CD4-positive, alpha-beta T cell (primary cell): ENCODE measurements at regions of chr7 and their contacts with region 1.

Region 1: GRCh38 chr7:114879554-114879953 is 42.3 kb upstream of the MDFIC start:
- DNase-seq: no peak
- ATAC-seq: no peak
- H3K4me3 ChIP-seq: no peak overlapping the region
- H3K4me3 Mint-ChIP-seq: no peak overlapping the region
- H3K27ac ChIP-seq: no peak overlapping the region
- H3K27ac Mint-ChIP-seq: no peak overlapping the region
- H3K4me1 ChIP-seq: no peaks in the 10 kb centered on the region
- H3K4me1 Mint-ChIP-seq: no peaks in the 10 kb centered on the region
- H3K27me3 ChIP-seq: no peaks in the 10 kb centered on the region
- H3K27me3 Mint-ChIP-seq: no peaks in the 10 kb centered on the region
- CTCF ChIP-seq: no peak

Region 2: DNA sequence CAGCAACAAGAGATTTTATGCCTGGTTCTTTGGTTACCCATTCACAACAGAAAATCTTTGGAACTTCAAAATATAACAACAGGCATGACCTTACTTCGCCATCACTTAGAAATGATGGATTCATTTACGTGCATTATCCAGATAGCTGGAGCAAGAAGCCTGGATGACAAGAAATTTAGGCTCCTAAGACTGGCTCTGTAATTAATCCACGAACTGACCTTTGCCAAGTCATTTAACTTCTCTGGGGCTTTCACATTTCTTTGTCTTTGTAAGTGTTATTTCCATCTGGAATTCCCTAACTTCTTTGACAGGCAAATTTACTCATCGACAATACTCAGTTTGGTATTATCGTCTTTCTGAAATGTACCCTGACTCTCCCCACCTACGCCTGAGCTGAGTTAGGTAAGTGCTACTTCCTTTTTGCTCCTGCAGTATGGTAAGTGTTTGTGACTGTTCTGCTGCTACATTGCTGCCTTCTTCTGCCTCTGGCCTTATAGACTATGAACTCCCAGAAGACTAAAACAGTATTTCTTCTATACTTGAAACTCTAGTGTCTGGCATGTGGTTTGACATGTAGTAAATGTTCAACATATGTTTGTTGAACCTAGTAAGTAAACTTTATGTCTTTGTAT is 36.8 kb after region 1 on chr7:
- CTCF ChIA-PET with region 1: no interaction called
- POLR2A ChIA-PET with region 1: no interaction called
- intact Hi-C with region 1: loop called in 1 of 2 experiments (anchors 5 kb)
- DNase-seq: peak in 4 of 14 experiments; percentile 31 to 54 (median 52)
- ATAC-seq: peak; percentile 81
- H3K4me3 ChIP-seq: peak overlapping the region; percentile 27
- H3K4me3 Mint-ChIP-seq: peak overlapping the region; percentile 72
- H3K27ac ChIP-seq: peak overlapping the region; percentile 2 to 64
- H3K27ac Mint-ChIP-seq: peak overlapping the region; percentile 48
- H3K4me1 ChIP-seq: peaks cover 10% of the 10 kb centered on the region
- H3K4me1 Mint-ChIP-seq: peaks cover 32% of the 10 kb centered on the region
- H3K27me3 ChIP-seq: no peaks in the 10 kb centered on the region
- H3K27me3 Mint-ChIP-seq: no peaks in the 10 kb centered on the region
- CTCF ChIP-seq: no peak